CD4-positive, alpha-beta T cell (primary cell): ENCODE measurements at regions of chr5 and their contacts with region 1.

Region 1: GRCh38 chr5:66814146-66814991 is 218.2 kb downstream of the MAST4 start:
- DNase-seq: peak in 10 of 14 experiments; percentile 15 to 72 (median 28)
- ATAC-seq: peak; percentile 68
- H3K4me3 ChIP-seq: no peak overlapping the region
- H3K4me3 Mint-ChIP-seq: no peak overlapping the region
- H3K27ac ChIP-seq: no peak overlapping the region
- H3K27ac Mint-ChIP-seq: no peak overlapping the region
- H3K4me1 ChIP-seq: peaks cover 3% of the 10 kb centered on the region
- H3K4me1 Mint-ChIP-seq: no peaks in the 10 kb centered on the region
- H3K27me3 ChIP-seq: no peaks in the 10 kb centered on the region
- H3K27me3 Mint-ChIP-seq: no peaks in the 10 kb centered on the region
- CTCF ChIP-seq: peak; percentile 72

Region 2: GRCh38 chr5:66829826-66830225 is 15.5 kb after region 1 on chr5:
- CTCF ChIA-PET with region 1: interaction called, 4 read pairs
- POLR2A ChIA-PET with region 1: interaction called, 9 read pairs
- intact Hi-C with region 1: loop called in 1 of 2 experiments (anchors 2 kb)
- DNase-seq: no peak
- ATAC-seq: no peak
- H3K4me3 ChIP-seq: no peak overlapping the region
- H3K4me3 Mint-ChIP-seq: no peak overlapping the region
- H3K27ac ChIP-seq: no peak overlapping the region
- H3K27ac Mint-ChIP-seq: no peak overlapping the region
- H3K4me1 ChIP-seq: peaks cover 8% of the 10 kb centered on the region
- H3K4me1 Mint-ChIP-seq: peaks cover 17% of the 10 kb centered on the region
- H3K27me3 ChIP-seq: no peaks in the 10 kb centered on the region
- H3K27me3 Mint-ChIP-seq: peaks cover 46% of the 10 kb centered on the region
- CTCF ChIP-seq: no peak

Region 3: GRCh38 chr5:66864331-66864840 is 50.0 kb after region 1 on chr5:
- CTCF ChIA-PET with region 1: no interaction called
- POLR2A ChIA-PET with region 1: no interaction called
- intact Hi-C with region 1: loop called in 1 of 2 experiments (anchors 2 kb)
- DNase-seq: peak in 4 of 14 experiments; percentile 5 to 53 (median 46)
- ATAC-seq: peak; percentile 21
- H3K4me3 ChIP-seq: no peak overlapping the region
- H3K4me3 Mint-ChIP-seq: no peak overlapping the region
- H3K27ac ChIP-seq: no peak overlapping the region
- H3K27ac Mint-ChIP-seq: no peak overlapping the region
- H3K4me1 ChIP-seq: no peaks in the 10 kb centered on the region
- H3K4me1 Mint-ChIP-seq: no peaks in the 10 kb centered on the region
- H3K27me3 ChIP-seq: no peaks in the 10 kb centered on the region
- H3K27me3 Mint-ChIP-seq: peaks cover 39% of the 10 kb centered on the region
- CTCF ChIP-seq: peak; percentile 9

Region 4: GRCh38 chr5:67032921-67033664 is 218.7 kb after region 1 on chr5:
- CTCF ChIA-PET with region 1: no interaction called
- POLR2A ChIA-PET with region 1: no interaction called
- intact Hi-C with region 1: no loop called
- DNase-seq: no peak
- ATAC-seq: no peak
- H3K4me3 ChIP-seq: no peak overlapping the region
- H3K4me3 Mint-ChIP-seq: no peak overlapping the region
- H3K27ac ChIP-seq: no peak overlapping the region
- H3K27ac Mint-ChIP-seq: no peak overlapping the region
- H3K4me1 ChIP-seq: peaks cover 14% of the 10 kb centered on the region
- H3K4me1 Mint-ChIP-seq: peaks cover 72% of the 10 kb centered on the region
- H3K27me3 ChIP-seq: no peaks in the 10 kb centered on the region
- H3K27me3 Mint-ChIP-seq: no peaks in the 10 kb centered on the region
- CTCF ChIP-seq: no peak

Region 5: DNA sequence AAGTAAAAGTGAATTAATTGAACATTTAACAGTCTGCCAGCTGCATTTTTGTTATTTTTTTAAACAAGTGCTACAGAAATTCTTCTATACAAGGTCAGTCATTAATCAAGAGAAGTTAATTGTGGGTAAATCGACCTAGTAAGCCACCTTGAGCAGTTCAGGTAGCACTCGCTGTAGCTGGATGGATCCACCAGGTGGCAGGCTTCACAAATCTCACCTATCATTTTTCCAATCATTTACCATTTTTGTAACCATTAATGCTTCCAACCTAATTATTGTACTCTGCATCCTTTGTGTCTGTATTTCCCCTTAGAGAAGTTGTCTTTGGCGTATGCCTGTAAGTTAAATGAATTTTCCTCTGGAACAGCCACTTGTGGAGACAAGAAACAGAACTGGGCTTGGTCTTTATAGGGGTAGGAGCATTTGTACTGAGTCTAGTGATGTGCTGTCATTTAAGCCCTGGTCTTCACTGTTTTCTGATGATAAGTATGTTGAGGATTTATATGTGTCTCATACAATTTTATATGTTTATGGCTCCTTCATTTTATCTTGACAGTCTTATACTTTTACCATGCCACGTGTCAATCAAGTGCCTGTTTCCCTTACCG is 342.7 kb after region 1 on chr5:
- CTCF ChIA-PET with region 1: no interaction called
- POLR2A ChIA-PET with region 1: no interaction called
- intact Hi-C with region 1: loop called in 1 of 2 experiments (anchors 5 kb)
- DNase-seq: peak; percentile 42 to 81 (median 50)
- ATAC-seq: peak; percentile 55
- H3K4me3 ChIP-seq: no peak overlapping the region
- H3K4me3 Mint-ChIP-seq: peak overlapping the region; percentile 17
- H3K27ac ChIP-seq: no peak overlapping the region
- H3K27ac Mint-ChIP-seq: peak overlapping the region; percentile 71
- H3K4me1 ChIP-seq: peaks cover 45% of the 10 kb centered on the region
- H3K4me1 Mint-ChIP-seq: peaks cover 59% of the 10 kb centered on the region
- H3K27me3 ChIP-seq: no peaks in the 10 kb centered on the region
- H3K27me3 Mint-ChIP-seq: no peaks in the 10 kb centered on the region
- CTCF ChIP-seq: peak; percentile 96

Region 6: DNA sequence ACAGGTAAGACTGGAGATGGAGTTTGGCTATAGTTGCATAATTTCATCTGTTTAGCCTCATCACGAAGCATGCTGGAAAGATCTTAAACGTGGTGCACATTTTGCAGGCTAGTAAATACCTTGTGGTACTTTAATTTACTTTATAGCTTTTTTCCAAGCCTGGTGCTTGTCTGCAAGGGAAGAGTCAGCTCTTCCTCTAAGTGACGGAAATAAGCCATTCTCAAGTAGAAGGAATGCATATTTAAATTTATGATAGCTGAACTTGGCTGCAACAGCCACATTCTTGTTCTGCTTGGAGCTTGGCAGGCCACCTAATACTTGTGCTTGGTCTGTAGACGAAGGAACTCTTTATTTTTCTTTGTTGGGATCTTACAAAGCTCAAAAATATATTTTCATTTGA is 1213.2 kb after region 1 on chr5:
- CTCF ChIA-PET with region 1: no interaction called
- POLR2A ChIA-PET with region 1: no interaction called
- intact Hi-C with region 1: no loop called
- DNase-seq: no peak
- ATAC-seq: no peak
- H3K4me3 ChIP-seq: no peak overlapping the region
- H3K4me3 Mint-ChIP-seq: no peak overlapping the region
- H3K27ac ChIP-seq: no peak overlapping the region
- H3K27ac Mint-ChIP-seq: no peak overlapping the region
- H3K4me1 ChIP-seq: no peaks in the 10 kb centered on the region
- H3K4me1 Mint-ChIP-seq: no peaks in the 10 kb centered on the region
- H3K27me3 ChIP-seq: no peaks in the 10 kb centered on the region
- H3K27me3 Mint-ChIP-seq: no peaks in the 10 kb centered on the region
- CTCF ChIP-seq: no peak

Region 7: GRCh38 chr5:68272289-68272688 is 1457.9 kb after region 1 on chr5:
- CTCF ChIA-PET with region 1: no interaction called
- POLR2A ChIA-PET with region 1: no interaction called
- intact Hi-C with region 1: loop called in 1 of 2 experiments (anchors 10 kb)
- DNase-seq: peak in 3 of 14 experiments; percentile 52 to 56 (median 54)
- ATAC-seq: no peak
- H3K4me3 ChIP-seq: no peak overlapping the region
- H3K4me3 Mint-ChIP-seq: no peak overlapping the region
- H3K27ac ChIP-seq: no peak overlapping the region
- H3K27ac Mint-ChIP-seq: peak overlapping the region; percentile 69
- H3K4me1 ChIP-seq: peaks cover 45% of the 10 kb centered on the region
- H3K4me1 Mint-ChIP-seq: peaks cover 96% of the 10 kb centered on the region
- H3K27me3 ChIP-seq: no peaks in the 10 kb centered on the region
- H3K27me3 Mint-ChIP-seq: no peaks in the 10 kb centered on the region
- CTCF ChIP-seq: peak; percentile 72